ENCODE measurements at regions of chr6 and their contacts with region 1.

Region 1: GRCh38 chr6:30814136-30815040 is 69.9 kb upstream of the DDR1 start:
- DNase-seq: no peak
- ATAC-seq: 0 out of 3 replicates have a peak, but pooled peaks have one; percentile 5
- H3K4me3 ChIP-seq: no peak overlapping the region
- H3K27ac ChIP-seq: peak overlapping the region; percentile 52
- H3K4me1 ChIP-seq: peaks cover 50% of the 10 kb centered on the region
- H3K27me3 ChIP-seq: no peaks in the 10 kb centered on the region
- CTCF ChIP-seq: no peak
- EP300 ChIP-seq: no peak
- POLR2A ChIP-seq: no peak
- RAD21 ChIP-seq: no peak

Region 2: GRCh38 chr6:30742316-30743098 is 71.9 kb before region 1 on chr6 and contains the start of gene FLOT1:
- CTCF ChIA-PET with region 1: interaction called, 40 read pairs
- POLR2A ChIA-PET with region 1: interaction called, 22 read pairs
- RAD21 ChIA-PET with region 1: interaction called, 45 read pairs
- SMC1A ChIA-PET with region 1: interaction called, 47 read pairs
- in situ Hi-C with region 1: no loop called
- intact Hi-C with region 1: loop called (anchors 1 kb)
- DNase-seq: peak; percentile 80
- ATAC-seq: peak; percentile 80
- H3K4me3 ChIP-seq: peak within 1 kb of the TSS; percentile 95
- H3K27ac ChIP-seq: peak within 1 kb of the TSS; percentile 72
- H3K4me1 ChIP-seq: peaks cover 23% of the 10 kb centered on the region
- H3K27me3 ChIP-seq: no peaks in the 10 kb centered on the region
- CTCF ChIP-seq: no peak
- EP300 ChIP-seq: peak in 1 of 2 experiments; percentile 12; a peak in 1 of 4 replicates
- POLR2A ChIP-seq: peak; percentile 83
- RAD21 ChIP-seq: no peak
- polyA plus RNA-seq, gene FLOT1: 12.3 to 16.8 TPM

Region 3: DNA sequence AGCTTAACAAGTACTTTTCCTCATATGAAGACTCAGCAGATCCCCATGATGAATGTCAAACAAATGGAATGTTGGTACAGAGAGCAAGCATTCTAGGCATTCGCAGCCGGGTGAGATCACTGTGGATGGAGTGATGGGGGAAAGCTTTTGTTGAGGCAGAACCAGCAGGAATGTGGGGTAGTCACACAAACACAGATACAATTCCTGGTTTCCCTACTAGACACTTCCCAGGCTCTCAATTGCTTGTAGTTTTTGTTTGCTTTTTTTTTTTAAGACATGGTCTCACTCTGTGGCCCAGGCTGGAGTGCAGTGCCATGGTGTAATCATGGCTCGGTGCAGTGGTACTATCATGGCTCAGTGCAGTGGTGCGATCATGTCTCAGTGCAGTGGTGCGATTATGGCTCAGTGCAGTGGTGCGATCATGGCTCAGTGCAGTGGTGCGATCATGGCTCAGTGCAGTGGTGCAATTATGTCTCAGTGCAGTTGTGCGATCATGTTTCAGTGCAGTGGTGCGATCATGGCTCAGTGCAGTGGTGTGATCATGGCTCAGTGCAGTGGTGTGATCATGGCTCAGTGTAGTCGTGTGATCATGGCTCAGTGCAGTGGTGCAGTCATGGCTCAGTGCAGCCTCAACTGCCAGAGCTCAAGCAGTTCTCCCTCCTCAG is 54.7 kb before region 1 on chr6:
- CTCF ChIA-PET with region 1: interaction called, 23 read pairs
- POLR2A ChIA-PET with region 1: interaction called, 49 read pairs
- RAD21 ChIA-PET with region 1: interaction called, 39 read pairs
- SMC1A ChIA-PET with region 1: interaction called, 217 read pairs
- in situ Hi-C with region 1: no loop called
- intact Hi-C with region 1: loop called (anchors 1 kb)
- DNase-seq: no peak
- ATAC-seq: no peak
- H3K4me3 ChIP-seq: no peak overlapping the region
- H3K27ac ChIP-seq: peak overlapping the region; percentile 35; the same call in 1 of the 2 replicates
- H3K4me1 ChIP-seq: peaks cover 22% of the 10 kb centered on the region; the same call in 1 of the 2 replicates
- H3K27me3 ChIP-seq: no peaks in the 10 kb centered on the region
- CTCF ChIP-seq: no peak
- EP300 ChIP-seq: no peak
- POLR2A ChIP-seq: no peak
- RAD21 ChIP-seq: no peak

Region 4: GRCh38 chr6:30781743-30782424 is 32.5 kb before region 1 on chr6:
- CTCF ChIA-PET with region 1: no interaction called
- POLR2A ChIA-PET with region 1: interaction called, 10 read pairs
- RAD21 ChIA-PET with region 1: interaction called, 19 read pairs
- SMC1A ChIA-PET with region 1: interaction called, 31 read pairs
- in situ Hi-C with region 1: no loop called
- intact Hi-C with region 1: no loop called
- DNase-seq: peak; percentile 66
- ATAC-seq: peak; percentile 75
- H3K4me3 ChIP-seq: no peak overlapping the region
- H3K27ac ChIP-seq: peak overlapping the region; percentile 44
- H3K4me1 ChIP-seq: peaks cover 15% of the 10 kb centered on the region
- H3K27me3 ChIP-seq: no peaks in the 10 kb centered on the region
- CTCF ChIP-seq: no peak
- EP300 ChIP-seq: no peak; a peak in 1 of 4 replicates
- POLR2A ChIP-seq: no peak
- RAD21 ChIP-seq: no peak

Region 5: DNA sequence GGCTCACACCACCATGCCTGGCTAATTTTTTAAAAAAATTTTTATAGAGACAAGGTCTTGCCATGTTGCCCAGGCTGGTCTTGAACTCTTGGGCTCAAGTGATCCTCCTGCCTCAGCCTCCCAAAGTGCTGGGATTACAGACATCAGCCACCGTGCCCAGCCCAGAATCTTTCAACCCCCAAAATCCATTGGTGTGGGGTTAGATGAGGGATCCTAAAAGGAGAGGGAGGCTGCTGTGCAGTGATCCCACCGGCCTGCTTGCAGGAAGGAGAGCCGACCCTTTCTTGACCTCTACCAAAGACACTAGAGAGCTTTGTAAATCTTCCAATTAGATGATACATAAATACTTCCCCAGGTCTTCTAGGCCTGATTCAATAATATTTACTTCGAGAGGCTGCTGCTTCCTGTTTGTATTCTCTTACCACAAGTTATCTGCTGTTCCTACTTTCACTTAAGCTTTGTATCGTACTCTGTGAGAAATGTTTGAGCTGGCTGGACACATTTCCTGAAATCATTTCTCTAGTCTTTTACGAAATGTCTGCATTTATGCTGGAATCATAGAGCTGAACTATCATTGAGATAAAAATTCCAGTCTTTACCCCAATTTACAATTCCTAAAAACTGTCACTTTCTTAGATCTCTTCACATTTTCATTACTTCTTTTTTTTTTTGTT is 20.7 kb before region 1 on chr6:
- CTCF ChIA-PET with region 1: interaction called, 15 read pairs
- POLR2A ChIA-PET with region 1: interaction called, 8 read pairs
- RAD21 ChIA-PET with region 1: interaction called, 14 read pairs
- SMC1A ChIA-PET with region 1: interaction called, 14 read pairs
- in situ Hi-C with region 1: no loop called
- intact Hi-C with region 1: no loop called
- DNase-seq: peak; percentile 57
- ATAC-seq: peak; percentile 97
- H3K4me3 ChIP-seq: no peak overlapping the region
- H3K27ac ChIP-seq: peak overlapping the region; percentile 84
- H3K4me1 ChIP-seq: peaks cover 16% of the 10 kb centered on the region
- H3K27me3 ChIP-seq: no peaks in the 10 kb centered on the region
- CTCF ChIP-seq: no peak
- EP300 ChIP-seq: 0 out of 4 replicates have a peak, but pooled peaks of 1 of the 2 experiments have one; percentile 36
- POLR2A ChIP-seq: no peak
- RAD21 ChIP-seq: no peak

Measured in GM12878 (cell line).